Activated B cell treated with CpG ODN at 0.5 μM for 24 hours (primary cell): ENCODE measurements at regions of chr13 and their contacts with region 1.

Region 1: DNA sequence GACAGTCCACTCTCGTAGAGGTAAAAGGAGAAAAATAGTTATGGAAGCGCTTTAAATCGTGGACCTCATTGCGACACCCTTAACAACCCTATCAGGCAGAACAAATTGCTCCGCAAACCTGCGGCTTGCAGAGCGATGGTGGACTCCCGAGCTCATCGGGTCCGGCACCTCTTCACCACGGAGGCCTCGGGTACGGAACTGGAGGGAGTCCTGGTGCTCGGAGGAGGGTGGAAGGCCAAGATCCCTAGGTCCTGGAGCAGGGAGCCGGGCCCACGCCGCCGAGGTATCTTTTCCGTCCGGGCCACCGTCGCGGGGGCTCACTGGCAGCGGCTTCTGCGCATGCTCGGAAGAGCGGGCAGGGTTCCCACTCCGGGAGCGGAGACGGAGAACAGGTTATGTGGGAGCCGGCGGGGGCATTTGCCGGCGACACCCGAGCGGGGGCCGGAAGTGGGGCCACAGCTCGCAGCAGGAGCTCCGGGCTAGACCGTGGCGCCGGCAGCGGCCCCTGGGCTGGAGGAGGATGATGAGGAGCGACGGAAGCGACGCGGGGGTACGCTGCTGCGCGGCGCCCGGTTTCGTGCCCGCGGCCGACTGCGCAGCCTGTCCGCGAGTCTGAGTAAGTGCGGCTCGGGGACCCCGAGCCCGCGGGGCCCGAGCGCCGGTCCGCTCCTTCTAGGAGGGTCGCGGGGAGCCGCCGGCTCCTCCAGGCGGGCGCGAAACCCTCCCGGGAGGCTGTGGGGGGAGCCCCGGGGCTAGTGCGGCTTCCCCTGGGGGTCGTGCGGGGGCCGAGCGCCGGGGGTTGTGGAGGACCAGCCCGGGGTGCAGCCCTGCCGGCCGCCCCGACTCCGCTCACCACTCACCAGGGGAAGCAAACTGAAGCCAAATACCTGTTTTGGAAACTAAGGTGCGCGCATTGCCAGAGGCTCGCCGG is at the start of gene ABHD13:
- DNase-seq: peak; percentile 92
- ATAC-seq: peak; percentile 62
- H3K4me3 Mint-ChIP-seq: peak within 1 kb of the TSS; percentile 96
- H3K27ac Mint-ChIP-seq: peak within 1 kb of the TSS; percentile 96
- H3K4me1 Mint-ChIP-seq: peaks cover 70% of the 10 kb centered on the region
- H3K27me3 Mint-ChIP-seq: no peaks in the 10 kb centered on the region
- CTCF ChIP-seq: no peak
- total RNA-seq, gene ABHD13: 9.4 and 10.9 TPM in 2 replicates

Region 2: DNA sequence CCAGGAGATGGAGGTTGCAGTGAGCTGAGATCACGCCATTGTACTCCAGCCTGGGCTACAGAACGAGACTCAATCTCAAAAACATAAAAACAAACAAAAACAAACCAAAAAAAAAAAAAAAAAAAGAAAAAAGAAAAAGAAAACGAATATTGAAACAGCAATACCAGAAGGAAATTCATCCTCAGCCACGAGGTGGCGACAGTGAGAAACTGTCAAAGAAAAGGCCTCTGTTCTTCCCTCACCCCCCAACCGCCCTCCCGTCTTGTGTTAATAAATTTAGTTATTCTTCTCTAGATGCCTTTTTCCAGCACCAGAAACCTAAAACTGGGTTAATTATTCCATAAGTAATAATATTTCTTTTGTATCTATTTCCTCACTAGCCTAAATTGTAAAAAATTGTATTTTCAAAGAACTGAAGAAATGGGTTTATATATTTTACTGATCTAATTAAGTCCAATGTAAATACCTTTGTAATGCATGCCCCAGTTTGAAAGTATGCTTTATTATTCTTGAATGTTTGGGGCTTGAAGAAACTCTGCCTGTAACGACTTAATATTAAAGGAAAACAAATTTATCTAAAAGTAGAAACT is 41.5 kb before region 1 on chr13:
- CTCF ChIA-PET with region 1: interaction called, 9 read pairs
- POLR2A ChIA-PET with region 1: no interaction called
- intact Hi-C with region 1: loop called (anchors 1 kb)
- DNase-seq: peak; percentile 25
- ATAC-seq: peak; percentile 50
- H3K4me3 Mint-ChIP-seq: no peak overlapping the region
- H3K27ac Mint-ChIP-seq: no peak overlapping the region
- H3K4me1 Mint-ChIP-seq: no peaks in the 10 kb centered on the region
- H3K27me3 Mint-ChIP-seq: no peaks in the 10 kb centered on the region
- CTCF ChIP-seq: no peak

Region 3: GRCh38 chr13:108269601-108270328 is 51.5 kb after region 1 on chr13 and contains the start of gene TNFSF13B:
- CTCF ChIA-PET with region 1: interaction called, 4 read pairs
- POLR2A ChIA-PET with region 1: interaction called, 4 read pairs
- intact Hi-C with region 1: loop called (anchors 1 kb)
- DNase-seq: peak; percentile 26
- ATAC-seq: peak; percentile 74
- H3K4me3 Mint-ChIP-seq: peak within 1 kb of the TSS; percentile 83
- H3K27ac Mint-ChIP-seq: peak within 1 kb of the TSS; percentile 91
- H3K4me1 Mint-ChIP-seq: peaks cover 48% of the 10 kb centered on the region
- H3K27me3 Mint-ChIP-seq: no peaks in the 10 kb centered on the region
- CTCF ChIP-seq: no peak
- total RNA-seq, gene TNFSF13B: 1.7 and 2.7 TPM in 2 replicates